Panc1 (cell line): ENCODE measurements at regions of chr22 and their contacts with region 1.

Region 1: GRCh38 chr22:39170825-39171622 is 18.5 kb upstream of the CBX7 start:
- DNase-seq: peak; percentile 56
- ATAC-seq: peak; percentile 82
- H3K4me3 ChIP-seq: no peak overlapping the region
- H3K27ac ChIP-seq: peak overlapping the region; percentile 87
- H3K4me1 ChIP-seq: peaks cover 56% of the 10 kb centered on the region
- H3K27me3 ChIP-seq: no peaks in the 10 kb centered on the region
- CTCF ChIP-seq: peak; percentile 90

Region 2: GRCh38 chr22:39215426-39216120 is 44.5 kb after region 1 on chr22:
- CTCF ChIA-PET with region 1: interaction called, 12 read pairs
- POLR2A ChIA-PET with region 1: no interaction called
- in situ Hi-C with region 1: no loop called
- intact Hi-C with region 1: no loop called
- DNase-seq: no peak
- ATAC-seq: no peak
- H3K4me3 ChIP-seq: no peak overlapping the region
- H3K27ac ChIP-seq: peak overlapping the region; percentile 91
- H3K4me1 ChIP-seq: peaks cover 36% of the 10 kb centered on the region
- H3K27me3 ChIP-seq: no peaks in the 10 kb centered on the region
- CTCF ChIP-seq: peak; percentile 73

Region 3: DNA sequence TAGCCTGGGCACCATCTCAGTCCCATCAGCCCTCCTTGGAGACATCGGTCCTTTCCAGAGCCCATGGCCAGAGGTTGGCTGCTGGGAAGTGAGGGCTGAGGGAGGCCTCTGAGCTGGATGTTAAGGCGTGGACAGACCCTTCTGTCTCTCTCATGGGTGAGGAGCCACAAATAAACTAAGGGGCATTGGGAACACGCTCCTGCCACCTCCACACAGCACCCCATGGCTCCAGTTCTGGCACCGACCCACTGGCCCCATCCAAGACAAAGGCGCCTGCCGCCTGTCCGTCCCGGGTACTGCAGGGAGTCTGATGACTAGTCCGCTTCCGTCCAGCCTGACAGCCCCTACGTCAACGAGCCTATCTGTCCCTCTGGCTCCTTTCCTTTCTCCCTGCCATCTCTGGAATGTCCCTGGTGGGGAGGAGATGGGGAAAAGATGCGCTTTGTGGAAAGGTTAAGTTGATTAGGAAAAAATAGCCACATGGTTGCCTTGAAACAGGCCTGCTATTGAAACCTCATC is 63.3 kb after region 1 on chr22:
- CTCF ChIA-PET with region 1: no interaction called
- POLR2A ChIA-PET with region 1: no interaction called
- in situ Hi-C with region 1: no loop called
- intact Hi-C with region 1: loop called (anchors 5 kb)
- DNase-seq: no peak
- ATAC-seq: no peak
- H3K4me3 ChIP-seq: no peak overlapping the region
- H3K27ac ChIP-seq: peak overlapping the region; percentile 89
- H3K4me1 ChIP-seq: peaks cover 54% of the 10 kb centered on the region
- H3K27me3 ChIP-seq: no peaks in the 10 kb centered on the region
- CTCF ChIP-seq: no peak

Region 4: GRCh38 chr22:39296957-39297489 is 126.0 kb after region 1 on chr22:
- CTCF ChIA-PET with region 1: no interaction called
- POLR2A ChIA-PET with region 1: no interaction called
- in situ Hi-C with region 1: no loop called
- intact Hi-C with region 1: no loop called
- DNase-seq: no peak
- ATAC-seq: peak; percentile 5; the same call in 1 of the 2 replicates
- H3K4me3 ChIP-seq: no peak overlapping the region
- H3K27ac ChIP-seq: peak overlapping the region; percentile 90
- H3K4me1 ChIP-seq: peaks cover 67% of the 10 kb centered on the region
- H3K27me3 ChIP-seq: no peaks in the 10 kb centered on the region
- CTCF ChIP-seq: no peak

Region 5: GRCh38 chr22:39309881-39310714 is 139.1 kb after region 1 on chr22:
- CTCF ChIA-PET with region 1: interaction called, 3 read pairs
- POLR2A ChIA-PET with region 1: no interaction called
- in situ Hi-C with region 1: no loop called
- intact Hi-C with region 1: loop called (anchors 5 kb)
- DNase-seq: no peak
- ATAC-seq: peak; percentile 17
- H3K4me3 ChIP-seq: no peak overlapping the region
- H3K27ac ChIP-seq: peak overlapping the region; percentile 85
- H3K4me1 ChIP-seq: peaks cover 68% of the 10 kb centered on the region
- H3K27me3 ChIP-seq: no peaks in the 10 kb centered on the region
- CTCF ChIP-seq: no peak